Ovary (tissue), 10 donors: ENCODE measurements at regions of chr5 and their contacts with region 1.

Region 1: GRCh38 chr5:10364186-10364683 is 10.7 kb downstream of the MARCHF6 start:
- DNase-seq: no peak
- H3K4me3 ChIP-seq: no peak overlapping the region
- H3K27ac ChIP-seq: no peak overlapping the region
- H3K4me1 ChIP-seq: peaks cover 16% of the 10 kb centered on the region
- H3K27me3 ChIP-seq: no peaks in the 10 kb centered on the region
- CTCF ChIP-seq: no peak
- EP300 ChIP-seq: no peak
- POLR2A ChIP-seq: no peak

Region 2: GRCh38 chr5:10432059-10433008 is 68.1 kb after region 1 on chr5:
- intact Hi-C with region 1: loop called in 1 of 4 experiments (anchors 10 kb)
- DNase-seq: no peak
- H3K4me3 ChIP-seq: no peak overlapping the region
- H3K27ac ChIP-seq: no peak overlapping the region
- H3K4me1 ChIP-seq: no peaks in the 10 kb centered on the region
- H3K27me3 ChIP-seq: no peaks in the 10 kb centered on the region
- CTCF ChIP-seq: no peak
- EP300 ChIP-seq: no peak
- POLR2A ChIP-seq: no peak